ENCODE measurements at regions of chr2 and their contacts with region 1.

Region 1: DNA sequence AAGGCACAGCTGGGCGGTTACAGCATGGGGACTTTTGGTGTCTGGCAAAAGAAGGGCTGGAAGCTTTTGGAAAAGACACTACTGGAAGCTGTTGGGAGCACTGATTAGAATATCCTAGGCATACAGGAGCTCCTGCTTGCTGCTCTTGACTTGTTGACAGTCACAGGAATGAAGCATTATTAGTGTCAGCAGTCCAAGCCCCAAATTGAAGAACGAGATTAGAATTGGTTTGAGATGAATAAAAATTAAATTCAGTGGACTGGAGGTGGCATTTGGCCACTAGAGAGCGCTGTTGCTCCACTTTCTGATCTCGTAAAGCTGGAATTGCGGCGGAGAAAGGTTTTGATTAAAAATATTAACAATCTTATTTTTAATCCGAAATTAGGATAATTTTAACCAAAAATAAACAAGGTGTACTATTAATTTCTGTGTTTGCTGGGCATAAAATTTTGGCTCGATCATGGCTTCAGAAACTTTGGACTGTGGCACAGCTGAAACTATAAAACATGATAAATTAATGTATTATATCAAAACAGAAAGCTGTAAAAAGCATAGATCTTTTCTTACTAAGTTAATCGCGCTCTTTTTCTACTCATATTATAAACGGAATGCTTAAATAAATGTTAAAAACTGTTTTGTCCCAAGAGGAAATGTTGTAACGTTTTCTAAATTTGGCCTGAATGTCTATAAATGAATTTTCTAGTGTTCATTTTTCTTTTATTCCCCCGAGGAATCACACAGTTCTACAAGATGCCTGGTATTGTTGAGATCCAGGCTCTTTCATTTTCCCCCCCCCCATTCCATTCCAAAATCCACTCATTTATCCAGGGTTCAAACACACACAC is 2.4 kb upstream of the HOXD8 start:
- DNase-seq: peak in 6 of 7 donors; percentile 74 to 91 (median 79)
- H3K4me3 ChIP-seq: peak overlapping the region in 1 of 4 donors; percentile 1
- H3K27ac ChIP-seq: no peak overlapping the region
- H3K4me1 ChIP-seq: peaks cover 4 to 17% of the 10 kb centered on the region in 2 donors
- H3K27me3 ChIP-seq: no peaks in the 10 kb centered on the region
- CTCF ChIP-seq: peak; percentile 83 to 99 (median 91)
- POLR2A ChIP-seq: no peak

Region 2: DNA sequence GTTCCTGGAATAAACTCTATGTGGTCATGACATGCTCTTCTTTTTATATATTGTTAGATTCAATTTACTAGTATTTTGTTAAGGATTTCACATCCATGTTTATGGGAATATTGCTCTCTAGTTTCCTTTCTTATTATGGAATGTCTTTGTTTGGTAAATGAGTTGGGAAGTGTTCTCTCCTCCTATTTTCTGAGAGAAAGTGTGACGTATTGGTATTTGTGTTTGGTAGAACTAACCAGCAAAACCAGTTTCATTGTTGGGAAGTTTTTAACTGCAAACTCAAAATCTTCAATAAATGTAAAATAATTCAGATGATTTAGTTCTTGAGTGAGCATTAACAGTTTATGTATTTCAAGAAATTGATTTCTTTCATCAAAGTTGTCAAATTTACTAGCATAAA is 113.7 kb before region 1 on chr2:
- intact Hi-C with region 1: no loop called
- DNase-seq: no peak
- H3K4me3 ChIP-seq: no peak overlapping the region
- H3K27ac ChIP-seq: no peak overlapping the region
- H3K4me1 ChIP-seq: no peaks in the 10 kb centered on the region
- H3K27me3 ChIP-seq: peaks cover under 1% of the 10 kb centered on the region
- CTCF ChIP-seq: no peak
- POLR2A ChIP-seq: no peak

Region 3: GRCh38 chr2:176246341-176246740 is 119.2 kb after region 1 on chr2:
- intact Hi-C with region 1: no loop called
- DNase-seq: no peak
- H3K4me3 ChIP-seq: no peak overlapping the region
- H3K27ac ChIP-seq: no peak overlapping the region
- H3K4me1 ChIP-seq: no peaks in the 10 kb centered on the region
- H3K27me3 ChIP-seq: no peaks in the 10 kb centered on the region
- CTCF ChIP-seq: no peak
- POLR2A ChIP-seq: no peak

Region 4: GRCh38 chr2:176454893-176455811 is 328.0 kb after region 1 on chr2:
- intact Hi-C with region 1: loop called in 1 of 2 experiments (anchors 5 kb)
- DNase-seq: peak; percentile 63 to 97 (median 87)
- H3K4me3 ChIP-seq: no peak overlapping the region
- H3K27ac ChIP-seq: peak overlapping the region in 1 of 5 donors; percentile 45
- H3K4me1 ChIP-seq: no peaks in the 10 kb centered on the region
- H3K27me3 ChIP-seq: no peaks in the 10 kb centered on the region
- CTCF ChIP-seq: peak; percentile 80 to 98 (median 88)
- POLR2A ChIP-seq: no peak

Region 5: GRCh38 chr2:176554101-176555048 is 427.2 kb after region 1 on chr2:
- intact Hi-C with region 1: loop called in 1 of 2 experiments (anchors 5 kb)
- DNase-seq: peak; percentile 27 to 76 (median 44)
- H3K4me3 ChIP-seq: peak overlapping the region in 2 of 4 donors; percentile 27 to 57
- H3K27ac ChIP-seq: peak overlapping the region in 4 of 5 donors; percentile 44 to 83 (median 78)
- H3K4me1 ChIP-seq: peaks cover 0 to 22% of the 10 kb centered on the region in 2 donors
- H3K27me3 ChIP-seq: no peaks in the 10 kb centered on the region
- CTCF ChIP-seq: peak; percentile 76 to 97 (median 88)
- POLR2A ChIP-seq: peak in 1 of 2 donors; percentile 2

Region 6: DNA sequence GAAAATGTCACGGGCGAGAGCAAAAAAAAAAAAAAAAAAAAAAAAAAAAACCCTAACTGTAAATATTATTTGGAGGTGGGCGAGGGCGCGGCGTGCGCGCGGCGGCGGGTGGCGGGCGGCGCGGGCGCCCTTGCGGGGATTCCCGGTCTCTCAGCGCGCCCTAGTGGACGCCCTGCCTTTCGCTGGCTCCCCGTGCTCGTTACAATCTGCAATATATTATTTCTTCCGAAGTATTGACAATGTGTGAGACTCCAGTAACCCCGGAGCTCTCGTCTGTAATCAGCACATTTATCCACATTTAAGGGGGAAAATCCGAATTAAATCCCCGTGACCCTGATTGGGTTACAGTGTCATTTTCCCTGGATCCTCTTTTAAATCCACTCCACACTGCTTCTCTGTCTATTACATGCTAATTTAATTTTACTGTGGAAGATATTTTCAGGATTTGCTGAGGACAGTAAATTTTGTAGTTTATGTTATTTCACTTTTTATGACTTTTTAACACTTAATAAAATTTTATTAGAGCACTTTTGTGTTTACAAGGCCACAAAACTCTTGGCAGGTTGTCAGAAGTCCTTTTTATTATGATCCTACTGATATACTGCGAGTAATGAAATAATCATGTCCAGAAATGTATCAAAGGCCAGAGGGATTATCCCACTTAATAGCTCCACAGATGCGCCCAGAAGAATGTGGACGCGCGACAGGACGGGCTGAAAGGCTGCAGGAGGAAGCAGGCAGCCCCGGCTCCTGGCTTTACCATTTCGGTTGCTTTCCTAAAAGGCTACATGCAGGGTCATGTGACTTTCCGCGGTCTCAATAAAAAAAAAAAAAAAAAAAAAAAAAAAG is 511.2 kb after region 1 on chr2:
- intact Hi-C with region 1: loop called (anchors 5 kb)
- DNase-seq: peak; percentile 67 to 88 (median 74)
- H3K4me3 ChIP-seq: peak overlapping the region in 2 of 4 donors; percentile 64 to 69
- H3K27ac ChIP-seq: peak overlapping the region in 2 of 5 donors; percentile 73 to 80
- H3K4me1 ChIP-seq: peaks cover 0 to 4% of the 10 kb centered on the region in 2 donors
- H3K27me3 ChIP-seq: no peaks in the 10 kb centered on the region
- CTCF ChIP-seq: peak; percentile 30 to 89 (median 63)
- POLR2A ChIP-seq: no peak

Region 7: DNA sequence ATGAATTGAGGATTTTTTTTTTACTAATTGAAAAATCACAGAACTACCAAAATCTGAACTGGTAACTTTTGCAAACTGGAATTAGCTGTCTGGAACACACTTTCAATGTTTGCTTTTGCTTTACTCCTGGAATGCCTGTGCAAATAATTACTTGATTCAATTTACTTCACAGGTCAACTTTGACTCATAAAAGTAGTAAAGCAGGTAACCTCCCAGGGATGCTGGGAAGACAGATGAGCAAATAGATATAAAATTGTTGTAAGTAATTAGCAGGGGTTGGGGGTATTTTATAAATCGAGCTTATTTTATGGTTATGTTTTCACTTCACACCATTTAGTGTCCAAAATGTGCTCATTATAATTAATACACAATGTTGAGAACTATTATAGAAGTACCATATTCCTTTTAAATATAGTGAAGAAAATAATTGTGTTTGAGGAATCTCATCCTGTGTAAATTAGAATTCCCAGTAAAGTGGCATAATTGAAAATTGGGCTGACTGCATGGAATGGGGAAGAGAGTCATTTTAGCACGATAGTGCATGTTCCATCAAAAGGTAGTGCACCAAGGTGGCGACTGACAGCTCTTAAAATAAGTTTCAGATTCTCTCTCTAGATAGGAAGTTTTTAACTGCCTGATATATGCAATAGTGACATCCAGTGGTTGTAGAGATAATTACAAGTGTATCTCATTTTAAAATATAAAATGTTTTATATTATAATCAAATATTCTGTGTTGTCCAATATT is 687.3 kb after region 1 on chr2:
- intact Hi-C with region 1: loop called (anchors 5 to 10 kb)
- DNase-seq: no peak
- H3K4me3 ChIP-seq: no peak overlapping the region
- H3K27ac ChIP-seq: no peak overlapping the region
- H3K4me1 ChIP-seq: peaks cover 16 to 30% of the 10 kb centered on the region in 2 donors
- H3K27me3 ChIP-seq: no peaks in the 10 kb centered on the region
- CTCF ChIP-seq: peak; percentile 54 to 80 (median 70)
- POLR2A ChIP-seq: no peak

Region 8: DNA sequence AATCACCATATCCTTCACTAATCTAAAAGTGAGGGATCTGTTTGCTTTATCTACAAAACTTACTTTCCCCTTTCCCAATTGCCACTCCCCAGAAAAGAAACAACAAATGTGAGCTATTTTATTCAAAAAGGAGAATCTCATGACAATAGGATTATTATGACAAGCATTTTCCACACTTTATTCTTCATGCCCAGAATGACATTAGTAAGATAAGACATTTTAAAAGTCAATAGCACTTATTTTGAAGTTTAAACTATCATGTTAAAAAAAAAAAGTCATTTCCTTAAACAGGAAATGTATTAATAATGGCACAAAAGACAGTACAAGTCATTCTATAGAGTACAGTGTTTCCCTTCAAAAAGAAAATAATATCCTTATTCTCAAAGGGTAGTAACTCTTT is 1026.7 kb after region 1 on chr2:
- intact Hi-C with region 1: loop called in 1 of 2 experiments (anchors 5 kb)
- DNase-seq: no peak
- H3K4me3 ChIP-seq: no peak overlapping the region
- H3K27ac ChIP-seq: no peak overlapping the region
- H3K4me1 ChIP-seq: no peaks in the 10 kb centered on the region
- H3K27me3 ChIP-seq: no peaks in the 10 kb centered on the region
- CTCF ChIP-seq: no peak
- POLR2A ChIP-seq: no peak